ENCODE measurements at regions of chr17 and their contacts with region 1.

Region 1: GRCh38 chr17:8118769-8119580 is 661 bp upstream of the ALOXE3 start:
- DNase-seq: peak; percentile 87 to 89
- H3K4me3 ChIP-seq: peak overlapping the region; percentile 7 to 30 (median 17)
- H3K27ac ChIP-seq: peak overlapping the region; percentile 65 to 83 (median 71)
- H3K4me1 ChIP-seq: peaks cover 44 to 46% of the 10 kb centered on the region in 2 donors
- H3K27me3 ChIP-seq: no peaks in the 10 kb centered on the region
- CTCF ChIP-seq: peak; percentile 68 to 86 (median 74)
- POLR2A ChIP-seq: no peak

Region 2: DNA sequence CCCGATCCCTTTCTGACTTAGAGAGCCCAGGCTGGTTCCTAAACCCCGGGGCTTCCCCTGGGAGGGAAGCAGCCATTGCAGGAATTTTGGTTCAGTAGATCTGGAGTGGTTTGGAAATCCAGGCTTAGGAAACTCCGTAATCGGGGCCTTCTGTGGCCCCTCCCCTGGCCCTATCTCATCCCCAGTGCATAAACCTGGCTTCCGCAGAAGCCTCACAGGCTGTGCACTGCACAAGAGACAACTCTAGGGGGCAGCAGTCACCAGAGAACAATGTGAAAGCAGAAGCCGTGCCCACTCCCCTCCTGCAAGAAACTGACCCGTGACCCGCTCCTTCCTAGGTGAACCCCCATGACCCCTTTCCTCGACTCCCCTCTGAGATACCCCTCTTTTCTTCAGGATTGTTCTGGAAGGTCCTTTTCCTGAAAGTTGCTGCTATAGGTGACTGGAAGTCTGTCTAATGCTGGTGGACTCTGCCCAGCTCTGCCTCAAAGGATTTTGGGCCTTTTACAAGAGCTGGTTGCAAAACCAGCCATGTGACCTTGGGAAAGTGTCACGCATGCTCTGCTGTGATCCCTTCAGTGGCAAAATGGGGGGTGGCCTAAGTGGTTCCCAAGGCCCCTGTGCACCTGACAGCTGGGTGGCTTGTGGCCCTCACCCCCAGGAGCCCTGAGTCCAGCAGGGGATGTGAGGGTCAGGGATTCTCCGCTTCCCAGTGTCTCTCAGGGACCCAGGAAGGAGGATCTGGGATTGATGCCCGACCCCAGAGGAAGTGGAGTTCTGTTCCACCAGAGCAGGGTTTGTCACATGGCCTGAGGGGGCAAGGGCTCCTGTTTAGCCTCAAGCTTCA is 102.1 kb before region 1 on chr17:
- intact Hi-C with region 1: no loop called
- DNase-seq: peak; percentile 52 to 55
- H3K4me3 ChIP-seq: peak overlapping the region in 2 of 3 donors; percentile 27 to 35
- H3K27ac ChIP-seq: peak overlapping the region; percentile 31 to 50 (median 42)
- H3K4me1 ChIP-seq: peaks cover 17 to 25% of the 10 kb centered on the region in 2 donors
- H3K27me3 ChIP-seq: no peaks in the 10 kb centered on the region
- CTCF ChIP-seq: peak; percentile 18 to 68 (median 51)
- POLR2A ChIP-seq: no peak

Region 3: GRCh38 chr17:8060274-8060673 is 58.7 kb before region 1 on chr17:
- intact Hi-C with region 1: loop called (anchors 5 kb)
- DNase-seq: peak; percentile 51 to 53
- H3K4me3 ChIP-seq: no peak overlapping the region
- H3K27ac ChIP-seq: no peak overlapping the region
- H3K4me1 ChIP-seq: peaks cover 0 to 9% of the 10 kb centered on the region in 2 donors
- H3K27me3 ChIP-seq: peaks cover 24% of the 10 kb centered on the region
- CTCF ChIP-seq: peak; percentile 62 to 81 (median 68)
- POLR2A ChIP-seq: no peak

Region 4: GRCh38 chr17:8189711-8190477 is 70.9 kb after region 1 on chr17 and contains the start of gene BORCS6:
- intact Hi-C with region 1: loop called (anchors 10 kb)
- DNase-seq: peak; percentile 98 to 99
- H3K4me3 ChIP-seq: peak within 1 kb of the TSS; percentile 42 to 95 (median 83)
- H3K27ac ChIP-seq: peak within 1 kb of the TSS; percentile 96 to 99 (median 96)
- H3K4me1 ChIP-seq: peaks cover 20 to 41% of the 10 kb centered on the region in 2 donors
- H3K27me3 ChIP-seq: no peaks in the 10 kb centered on the region
- CTCF ChIP-seq: peak in 1 of 6 experiments; percentile 12
- POLR2A ChIP-seq: peak in 1 of 2 donors; percentile 88
- total RNA-seq, gene BORCS6: 7.7 to 17.0 (median 15.5) TPM

Region 5: DNA sequence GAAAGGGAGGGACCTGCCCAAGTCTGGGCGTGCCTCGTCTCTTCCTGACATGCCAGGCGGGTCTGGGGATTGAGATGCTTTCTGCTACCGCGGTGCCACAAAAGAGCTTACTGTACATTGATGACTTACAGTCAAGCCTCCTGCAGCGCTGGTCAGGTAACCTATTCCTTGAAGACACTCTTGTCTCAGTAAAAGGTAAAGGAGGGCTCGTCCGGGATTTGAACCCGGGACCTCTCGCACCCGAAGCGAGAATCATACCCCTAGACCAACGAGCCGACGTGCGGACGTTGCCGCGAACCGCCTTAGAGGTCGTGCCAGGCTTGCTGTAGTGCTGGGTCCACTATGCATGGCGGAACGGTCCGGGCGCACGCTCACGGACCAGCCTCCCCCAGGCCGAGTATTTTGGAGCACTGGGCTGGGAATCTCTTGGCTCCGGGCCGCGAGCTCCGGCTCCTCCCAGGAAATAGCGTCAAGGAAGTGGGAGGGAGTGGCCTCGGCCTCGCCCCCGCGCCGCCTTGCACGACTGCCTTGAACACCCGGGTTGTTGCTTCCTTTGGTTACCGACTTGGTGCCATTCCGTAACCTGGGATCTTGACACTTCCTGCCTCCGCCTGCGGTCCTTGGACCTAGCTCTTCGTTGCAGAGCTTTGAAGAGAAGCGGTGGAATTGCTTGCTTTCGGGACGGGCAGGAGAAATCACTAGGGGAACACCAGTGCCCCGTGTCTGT is 103.8 kb after region 1 on chr17:
- intact Hi-C with region 1: loop called (anchors 10 kb)
- DNase-seq: peak; percentile 95
- H3K4me3 ChIP-seq: peak overlapping the region; percentile 3 to 66 (median 25)
- H3K27ac ChIP-seq: peak overlapping the region; percentile 93 to 99 (median 98)
- H3K4me1 ChIP-seq: peaks cover 8 to 18% of the 10 kb centered on the region in 2 donors
- H3K27me3 ChIP-seq: no peaks in the 10 kb centered on the region
- CTCF ChIP-seq: no peak
- POLR2A ChIP-seq: peak; percentile 48 to 89